Activated T-helper 1 cell treated with anti-CD3 and anti-CD28 coated beads, Interleukin-12 subunit alpha, Interleukin-12 subunit beta, Interleukin-2, Interleukin-4 antibody, amounts not matched to agents 30 ng/mL and 10 ng/mL and 1 ng/mL, durations not matched to agents 14 hours and 24 hours and 36 hours (primary cell): ENCODE measurements at regions of chr20 and their contacts with region 1.

Region 1: DNA sequence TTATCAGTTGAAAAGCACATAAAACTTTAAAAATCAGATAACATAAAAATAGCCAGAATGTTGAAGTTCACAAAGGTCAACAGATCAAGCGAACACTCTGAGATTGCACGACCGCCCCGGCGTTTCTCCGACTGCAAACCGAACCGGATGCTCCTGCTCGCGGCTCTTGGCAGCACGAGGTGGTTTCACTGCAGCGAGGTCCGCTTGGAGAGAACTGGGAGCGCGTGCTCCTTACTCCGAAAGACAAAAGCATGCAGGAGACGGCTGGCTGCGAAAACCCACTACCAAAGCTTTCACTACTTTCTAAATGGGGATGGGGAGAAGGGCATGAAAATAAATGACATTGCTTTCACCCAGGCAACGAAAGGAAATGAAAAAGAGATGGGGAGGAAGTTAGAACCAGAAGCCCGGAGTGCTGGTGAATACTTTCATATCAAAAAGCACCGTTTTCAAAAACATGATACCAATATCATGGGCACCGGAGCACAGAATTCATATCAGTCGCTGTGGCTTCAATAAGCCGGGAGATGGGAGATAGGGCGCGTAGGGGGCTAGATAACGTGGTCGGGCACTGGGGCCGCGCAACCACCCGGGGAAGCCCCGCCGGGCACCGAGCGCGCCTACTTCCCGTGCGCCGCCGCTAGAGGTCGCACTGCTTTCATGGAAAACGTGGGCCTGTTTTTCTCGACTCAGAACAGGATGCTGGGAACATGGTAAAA is 8.3 kb upstream of the ANKRD60 start:
- DNase-seq: peak; percentile 79
- H3K4me3 Mint-ChIP-seq: peak overlapping the region; percentile 83
- H3K27ac Mint-ChIP-seq: peak overlapping the region; percentile 84
- H3K4me1 Mint-ChIP-seq: peaks cover 30% of the 10 kb centered on the region
- H3K27me3 Mint-ChIP-seq: no peaks in the 10 kb centered on the region

Region 2: DNA sequence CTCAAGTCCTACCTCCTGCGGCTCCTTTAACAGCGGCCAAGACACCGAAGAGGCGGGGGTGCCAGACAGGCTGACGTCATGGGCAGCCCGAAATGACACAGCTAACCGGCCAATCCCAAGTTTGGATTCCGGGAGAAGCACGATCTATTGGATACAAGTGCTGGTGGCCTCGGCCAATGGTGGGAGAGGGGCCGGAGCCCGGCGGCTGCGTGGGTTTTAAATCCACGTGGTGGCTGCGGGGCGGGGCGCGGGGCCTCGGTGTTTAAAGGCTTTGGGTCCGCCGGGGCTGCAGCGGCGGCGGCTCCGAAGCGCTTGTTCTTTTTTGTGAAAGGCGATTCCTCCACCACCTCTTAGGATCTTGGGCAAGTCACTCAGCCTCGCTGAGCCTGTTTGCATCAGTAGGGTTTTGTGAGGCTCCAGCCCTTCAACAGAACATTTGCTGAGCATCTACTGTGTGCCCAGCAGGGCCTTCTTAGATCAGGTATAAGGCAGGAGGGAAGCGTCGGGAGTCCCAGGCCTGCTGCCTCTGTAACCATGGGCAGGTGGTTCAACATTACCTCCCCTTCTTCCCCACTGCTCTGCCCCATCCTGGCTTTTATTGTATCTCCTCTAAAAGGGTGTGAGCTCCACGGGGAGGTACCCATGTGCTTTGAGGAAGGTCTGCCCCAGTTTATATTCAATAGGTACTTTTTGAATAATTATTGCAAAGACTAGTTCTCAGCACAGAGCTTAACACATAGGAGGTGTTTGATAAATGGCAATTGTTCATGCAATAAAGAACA is 518.1 kb before region 1 on chr20:
- intact Hi-C with region 1: no loop called
- DNase-seq: peak; percentile 78
- H3K4me3 Mint-ChIP-seq: peak overlapping the region; percentile 22
- H3K27ac Mint-ChIP-seq: no peak overlapping the region
- H3K4me1 Mint-ChIP-seq: no peaks in the 10 kb centered on the region
- H3K27me3 Mint-ChIP-seq: peaks cover 23% of the 10 kb centered on the region

Region 3: GRCh38 chr20:58160451-58161061 is 76.2 kb before region 1 on chr20:
- intact Hi-C with region 1: no loop called
- DNase-seq: no peak
- H3K4me3 Mint-ChIP-seq: no peak overlapping the region
- H3K27ac Mint-ChIP-seq: no peak overlapping the region
- H3K4me1 Mint-ChIP-seq: no peaks in the 10 kb centered on the region
- H3K27me3 Mint-ChIP-seq: peaks cover 4% of the 10 kb centered on the region

Region 4: DNA sequence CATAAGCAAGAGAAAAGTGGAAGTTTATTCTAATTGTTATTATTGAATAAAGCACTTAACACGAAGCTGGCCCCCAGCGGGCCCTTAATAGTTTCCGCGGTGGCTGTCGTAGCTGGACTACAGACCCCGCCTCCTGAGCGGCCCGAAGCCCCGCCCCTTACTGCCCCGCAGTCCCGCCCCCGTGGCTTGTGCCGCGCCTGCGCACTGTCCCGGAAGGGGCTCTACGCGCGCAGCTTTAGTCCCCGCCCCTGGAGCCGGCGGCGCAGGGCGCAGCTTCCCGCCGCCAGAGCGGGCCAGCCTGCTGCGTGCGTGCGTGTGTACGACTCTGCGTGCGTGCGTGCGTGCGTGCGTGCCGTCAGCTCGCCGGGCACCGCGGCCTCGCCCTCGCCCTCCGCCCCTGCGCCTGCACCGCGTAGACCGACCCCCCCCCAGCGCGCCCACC is 152.1 kb after region 1 on chr20 and contains the start of gene VAPB:
- intact Hi-C with region 1: loop called (anchors 1 kb)
- DNase-seq: peak; percentile 97
- H3K4me3 Mint-ChIP-seq: peak within 1 kb of the TSS; percentile 99
- H3K27ac Mint-ChIP-seq: peak within 1 kb of the TSS; percentile 96
- H3K4me1 Mint-ChIP-seq: peaks cover 39% of the 10 kb centered on the region
- H3K27me3 Mint-ChIP-seq: peaks cover 10% of the 10 kb centered on the region
- total RNA-seq, gene VAPB: 39.7 and 40.9 TPM in 2 replicates

Region 5: DNA sequence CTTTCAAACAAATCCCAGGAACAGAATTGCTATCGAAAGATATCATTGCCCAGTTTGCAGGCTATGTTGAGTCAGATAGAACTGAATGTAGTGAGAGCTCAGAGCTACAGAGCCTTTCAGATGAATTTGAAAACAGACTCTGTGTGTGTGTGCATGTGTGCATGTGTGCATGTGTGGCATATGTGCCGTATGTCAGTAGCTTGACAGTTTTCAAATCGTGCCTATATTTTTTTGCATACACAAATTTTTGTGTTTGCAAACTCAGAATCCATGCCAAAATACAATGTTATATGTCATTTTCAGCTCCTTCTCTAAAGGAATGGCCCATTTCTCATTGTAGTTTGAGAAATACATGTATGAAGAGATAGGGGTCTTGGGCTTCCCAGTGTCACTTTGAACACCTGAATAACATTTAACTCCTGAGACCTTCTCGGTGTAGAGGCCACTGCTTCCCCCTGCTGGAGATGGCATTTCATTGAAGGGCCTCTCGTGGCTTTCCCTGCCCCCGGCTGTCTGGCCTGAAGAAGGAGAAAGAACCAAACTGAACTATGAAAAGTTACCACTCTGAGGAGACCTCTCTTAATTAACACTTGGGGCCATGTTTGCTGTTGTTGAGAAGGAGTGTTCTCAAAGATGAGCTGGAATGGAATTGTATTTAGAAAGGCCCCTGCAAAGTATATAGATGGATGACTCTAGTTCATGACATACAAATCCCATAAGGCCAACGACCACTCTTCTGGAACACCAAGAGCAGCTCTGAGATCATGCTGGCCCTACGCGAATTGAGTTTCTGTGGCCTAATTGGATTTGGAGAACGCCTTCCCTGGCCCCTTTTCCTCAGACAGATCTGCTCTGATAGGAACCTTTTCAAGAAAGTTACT is 211.0 kb after region 1 on chr20:
- intact Hi-C with region 1: loop called (anchors 1 kb)
- DNase-seq: peak; percentile 37
- H3K4me3 Mint-ChIP-seq: no peak overlapping the region
- H3K27ac Mint-ChIP-seq: no peak overlapping the region
- H3K4me1 Mint-ChIP-seq: peaks cover 24% of the 10 kb centered on the region
- H3K27me3 Mint-ChIP-seq: no peaks in the 10 kb centered on the region

Region 6: GRCh38 chr20:58839991-58840759 is 603.4 kb after region 1 on chr20:
- intact Hi-C with region 1: loop called (anchors 10 kb)
- DNase-seq: no peak
- H3K4me3 Mint-ChIP-seq: peak overlapping the region; percentile 58
- H3K27ac Mint-ChIP-seq: peak overlapping the region; percentile 55
- H3K4me1 Mint-ChIP-seq: no peaks in the 10 kb centered on the region
- H3K27me3 Mint-ChIP-seq: peaks cover 72% of the 10 kb centered on the region

Region 7: DNA sequence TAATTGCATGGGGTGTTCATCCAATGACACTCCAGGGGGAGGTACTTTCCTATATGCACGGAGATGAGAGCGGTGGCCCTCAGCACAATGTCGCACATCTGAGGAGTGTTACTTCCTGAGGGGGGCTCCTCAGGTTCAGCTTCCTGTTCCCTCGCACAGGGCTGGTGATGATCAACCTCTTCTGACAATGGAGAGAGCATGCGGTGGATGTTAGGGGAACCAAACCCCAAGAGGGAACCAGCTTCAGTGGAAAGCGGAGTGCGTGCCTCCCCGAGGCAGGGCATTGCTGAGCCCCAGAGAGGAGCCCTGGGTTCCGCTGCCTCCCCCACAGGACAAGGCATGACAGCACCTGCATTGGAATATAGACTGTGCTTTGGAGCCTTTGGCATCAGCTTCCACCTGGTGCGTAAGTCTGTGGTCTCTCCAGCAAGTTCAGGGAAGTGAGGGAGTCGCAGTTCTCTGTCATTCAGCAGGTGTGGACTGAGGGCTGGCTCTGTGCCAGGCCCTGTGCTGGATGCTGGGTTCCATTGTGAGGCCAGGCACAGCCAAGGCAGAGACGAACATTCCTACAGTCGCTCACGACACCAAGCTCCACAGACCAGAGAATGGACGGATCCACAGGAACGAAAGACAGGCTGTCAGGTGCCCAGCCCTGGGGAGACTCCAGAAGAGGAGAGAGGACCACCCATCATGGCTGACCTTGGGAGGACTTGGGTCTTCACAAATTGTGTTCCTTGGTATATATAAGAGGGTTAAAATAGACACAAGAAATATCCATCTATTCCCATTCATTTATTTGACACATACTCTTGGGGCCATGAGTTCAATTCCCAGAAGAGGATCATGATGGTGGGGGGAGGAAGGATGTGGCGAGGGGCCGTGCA is 923.0 kb after region 1 on chr20:
- intact Hi-C with region 1: loop called (anchors 2 kb)
- DNase-seq: peak; percentile 52
- H3K4me3 Mint-ChIP-seq: peak overlapping the region; percentile 78
- H3K27ac Mint-ChIP-seq: peak overlapping the region; percentile 92
- H3K4me1 Mint-ChIP-seq: peaks cover 80% of the 10 kb centered on the region
- H3K27me3 Mint-ChIP-seq: no peaks in the 10 kb centered on the region